CD14-positive monocyte (primary cell): ENCODE measurements at regions of chr21 and their contacts with region 1.

Region 1: GRCh38 chr21:29164325-29164942 is 34.0 kb downstream of the MAP3K7CL start:
- DNase-seq: peak in 2 of 3 donors; percentile 68 to 71
- H3K4me3 ChIP-seq: peak overlapping the region in 1 of 3 experiments; percentile 35
- H3K4me3 Mint-ChIP-seq: no peak overlapping the region
- H3K27ac ChIP-seq: peak overlapping the region; percentile 91 to 99
- H3K27ac Mint-ChIP-seq: peak overlapping the region; percentile 94 to 100 (median 99)
- H3K4me1 ChIP-seq: peaks cover 83 to 95% of the 10 kb centered on the region in 2 donors
- H3K4me1 Mint-ChIP-seq: peaks cover 76% of the 10 kb centered on the region
- H3K27me3 ChIP-seq: no peaks in the 10 kb centered on the region
- H3K27me3 Mint-ChIP-seq: no peaks in the 10 kb centered on the region
- CTCF ChIP-seq: peak; percentile 80

Region 2: DNA sequence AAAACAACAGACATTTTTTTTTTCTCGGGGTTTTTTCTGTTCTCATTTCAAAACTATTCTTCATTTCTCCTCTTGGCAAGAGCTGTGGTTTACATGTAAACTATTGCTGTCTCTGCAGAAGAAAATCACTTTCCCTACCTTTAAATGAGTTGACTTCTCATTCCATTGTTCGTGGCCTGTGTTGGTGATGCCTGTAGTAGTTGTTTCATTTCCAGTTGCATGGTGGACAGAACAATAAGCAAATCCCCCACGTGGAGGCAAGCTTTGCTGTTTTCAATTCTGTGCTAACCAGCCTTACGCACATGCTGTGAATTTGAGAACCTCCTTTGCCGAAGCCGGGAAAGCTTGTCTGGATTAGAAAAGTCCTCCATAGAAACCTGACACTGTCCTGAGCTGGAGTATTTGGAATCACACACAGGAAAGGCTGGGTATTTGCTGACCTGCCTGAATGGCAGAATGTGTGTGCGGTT is 60.2 kb before region 1 on chr21:
- intact Hi-C with region 1: loop called in 1 of 2 experiments (anchors 5 kb)
- DNase-seq: no peak
- H3K4me3 ChIP-seq: no peak overlapping the region
- H3K4me3 Mint-ChIP-seq: no peak overlapping the region
- H3K27ac ChIP-seq: no peak overlapping the region
- H3K27ac Mint-ChIP-seq: peak overlapping the region in 4 of 7 donors; percentile 3 to 77 (median 16)
- H3K4me1 ChIP-seq: peaks cover 14 to 19% of the 10 kb centered on the region in 2 donors
- H3K4me1 Mint-ChIP-seq: peaks cover 23% of the 10 kb centered on the region
- H3K27me3 ChIP-seq: no peaks in the 10 kb centered on the region
- H3K27me3 Mint-ChIP-seq: peaks cover 0 to 3% (median 0%) of the 10 kb centered on the region in 3 donors
- CTCF ChIP-seq: no peak

Region 3: DNA sequence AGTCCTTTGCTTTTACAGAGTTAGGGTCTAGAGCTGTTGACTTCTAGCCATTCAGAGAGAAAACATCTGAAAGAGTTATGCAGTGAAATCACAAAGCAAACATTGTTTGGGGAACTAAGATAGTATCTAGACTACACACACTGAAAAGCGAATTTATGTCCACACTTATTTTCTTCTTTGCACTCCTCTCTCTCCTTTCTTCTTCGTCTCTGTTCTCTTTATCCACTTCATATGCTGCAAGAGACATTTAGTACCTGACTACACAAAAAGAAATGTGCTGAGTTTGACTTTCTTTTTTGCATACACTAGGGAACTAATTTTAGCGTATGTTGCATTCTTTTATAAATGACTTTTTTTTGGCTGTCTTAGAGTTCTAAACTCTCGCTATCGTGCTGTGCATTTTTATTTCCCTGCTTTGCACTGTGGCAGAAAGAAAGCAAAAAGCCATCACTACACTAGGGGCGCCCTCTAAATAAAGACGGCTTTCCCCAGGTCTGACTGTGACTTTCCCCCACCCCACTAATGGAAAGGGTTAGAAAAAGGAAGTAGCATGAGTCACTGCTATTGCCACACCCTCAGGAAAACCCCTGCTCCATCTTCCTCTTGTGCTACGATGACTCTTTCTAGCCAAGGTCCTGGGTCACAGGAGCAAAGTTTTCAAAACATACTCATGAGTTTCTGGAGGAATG is 31.7 kb after region 1 on chr21:
- intact Hi-C with region 1: loop called in 1 of 2 experiments (anchors 5 kb)
- DNase-seq: peak; percentile 98 to 100 (median 99)
- H3K4me3 ChIP-seq: peak overlapping the region; percentile 19 to 62 (median 55)
- H3K4me3 Mint-ChIP-seq: peak overlapping the region; percentile 61 to 86
- H3K27ac ChIP-seq: peak overlapping the region; percentile 96 to 100
- H3K27ac Mint-ChIP-seq: peak overlapping the region; percentile 99 to 100 (median 99)
- H3K4me1 ChIP-seq: peaks cover 56 to 61% of the 10 kb centered on the region in 2 donors
- H3K4me1 Mint-ChIP-seq: peaks cover 59% of the 10 kb centered on the region
- H3K27me3 ChIP-seq: no peaks in the 10 kb centered on the region
- H3K27me3 Mint-ChIP-seq: no peaks in the 10 kb centered on the region
- CTCF ChIP-seq: peak; percentile 82

Region 4: DNA sequence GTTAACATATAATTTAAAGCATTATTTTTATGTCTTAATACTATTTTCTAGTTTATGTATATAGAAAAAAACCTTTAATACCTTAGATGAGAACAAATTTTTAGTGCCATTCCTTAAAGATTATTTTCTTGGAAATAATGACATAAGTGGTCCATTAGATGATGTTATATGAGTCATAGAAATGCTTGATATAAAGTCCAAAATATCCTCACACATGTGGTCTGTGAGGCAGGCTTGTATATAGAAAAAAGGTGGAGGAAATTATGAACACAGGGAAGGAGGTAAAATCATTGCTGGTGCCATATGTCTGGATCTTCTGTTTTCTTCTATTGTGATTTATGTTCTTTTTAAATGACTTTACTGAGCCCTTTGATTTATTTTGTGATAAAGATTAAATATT is 45.3 kb after region 1 on chr21:
- intact Hi-C with region 1: loop called in 1 of 2 experiments (anchors 5 kb)
- DNase-seq: no peak
- H3K4me3 ChIP-seq: no peak overlapping the region
- H3K4me3 Mint-ChIP-seq: no peak overlapping the region
- H3K27ac ChIP-seq: peak overlapping the region; percentile 88 to 97
- H3K27ac Mint-ChIP-seq: peak overlapping the region in 5 of 7 donors; percentile 45 to 76 (median 58)
- H3K4me1 ChIP-seq: peaks cover 26 to 34% of the 10 kb centered on the region in 2 donors
- H3K4me1 Mint-ChIP-seq: peaks cover 31% of the 10 kb centered on the region
- H3K27me3 ChIP-seq: no peaks in the 10 kb centered on the region
- H3K27me3 Mint-ChIP-seq: no peaks in the 10 kb centered on the region
- CTCF ChIP-seq: no peak

Region 5: GRCh38 chr21:29232601-29233546 is 68.4 kb after region 1 on chr21:
- intact Hi-C with region 1: no loop called
- DNase-seq: peak in 2 of 3 donors; percentile 59 to 60
- H3K4me3 ChIP-seq: peak overlapping the region in 1 of 3 experiments; percentile 44
- H3K4me3 Mint-ChIP-seq: peak overlapping the region; percentile 28 to 84
- H3K27ac ChIP-seq: peak overlapping the region in 1 of 2 donors; percentile 78
- H3K27ac Mint-ChIP-seq: peak overlapping the region; percentile 73 to 96 (median 85)
- H3K4me1 ChIP-seq: peaks cover 89 to 96% of the 10 kb centered on the region in 2 donors
- H3K4me1 Mint-ChIP-seq: peaks cover 92% of the 10 kb centered on the region
- H3K27me3 ChIP-seq: no peaks in the 10 kb centered on the region
- H3K27me3 Mint-ChIP-seq: no peaks in the 10 kb centered on the region
- CTCF ChIP-seq: peak; percentile 32